ENCODE measurements at regions of chr1 and their contacts with region 1.

Region 1: GRCh38 chr1:34786521-34787325 is 5.7 kb downstream of the GJB3 start:
- DNase-seq: no peak
- ATAC-seq: peak; percentile 62

Region 2: GRCh38 chr1:34852677-34853217 is 66.0 kb after region 1 on chr1:
- intact Hi-C with region 1: loop called (anchors 1 kb)
- DNase-seq: peak; percentile 85
- ATAC-seq: peak; percentile 93

Region 3: DNA sequence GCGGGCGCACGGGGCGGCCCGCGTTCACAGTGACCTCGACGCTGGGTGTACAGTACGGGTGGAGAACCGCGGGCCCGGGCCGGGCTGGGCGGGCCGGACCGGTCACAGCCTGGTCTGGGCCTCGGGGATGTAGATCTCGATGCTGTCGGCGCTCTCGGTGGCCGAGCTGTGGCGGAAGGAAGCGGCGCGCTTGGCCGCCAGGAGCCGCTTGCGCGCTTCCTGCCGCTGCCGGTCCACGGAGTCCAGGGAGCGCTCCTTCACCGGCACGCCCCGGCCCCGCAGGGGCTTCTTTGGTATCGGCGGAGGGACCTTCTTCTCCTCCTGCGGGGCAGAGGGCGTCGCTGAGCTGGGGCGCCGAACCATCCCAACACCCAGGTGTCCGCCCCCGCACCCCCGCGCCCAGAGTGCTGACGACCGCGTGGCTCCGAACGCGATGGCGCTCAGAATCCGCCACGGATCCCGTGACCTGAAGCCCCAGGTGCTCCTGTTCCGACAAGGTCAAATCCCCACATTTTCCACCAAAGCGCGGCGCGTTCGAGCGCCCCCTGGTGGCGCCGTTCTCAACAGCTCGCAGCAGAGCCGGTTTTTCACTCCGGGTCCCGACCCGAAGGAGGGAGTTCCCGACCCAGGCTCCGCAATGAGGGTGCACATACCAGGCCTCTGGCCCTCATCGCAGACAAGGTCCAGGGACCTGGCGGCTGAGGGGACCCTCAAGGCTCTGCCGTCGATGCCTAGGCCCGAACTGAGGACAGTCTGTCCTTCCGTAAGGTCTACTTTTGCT is 79.4 kb after region 1 on chr1:
- intact Hi-C with region 1: loop called (anchors 1 kb)
- DNase-seq: peak; percentile 94
- ATAC-seq: peak; percentile 76

Measured in Right ventricle myocardium inferior (tissue), 1 donor.